Activated CD4-positive, alpha-beta T cell treated with anti-CD3 and anti-CD28 coated beads for 36 hours (primary cell): ENCODE measurements at regions of chr5 and their contacts with region 1.

Region 1: DNA sequence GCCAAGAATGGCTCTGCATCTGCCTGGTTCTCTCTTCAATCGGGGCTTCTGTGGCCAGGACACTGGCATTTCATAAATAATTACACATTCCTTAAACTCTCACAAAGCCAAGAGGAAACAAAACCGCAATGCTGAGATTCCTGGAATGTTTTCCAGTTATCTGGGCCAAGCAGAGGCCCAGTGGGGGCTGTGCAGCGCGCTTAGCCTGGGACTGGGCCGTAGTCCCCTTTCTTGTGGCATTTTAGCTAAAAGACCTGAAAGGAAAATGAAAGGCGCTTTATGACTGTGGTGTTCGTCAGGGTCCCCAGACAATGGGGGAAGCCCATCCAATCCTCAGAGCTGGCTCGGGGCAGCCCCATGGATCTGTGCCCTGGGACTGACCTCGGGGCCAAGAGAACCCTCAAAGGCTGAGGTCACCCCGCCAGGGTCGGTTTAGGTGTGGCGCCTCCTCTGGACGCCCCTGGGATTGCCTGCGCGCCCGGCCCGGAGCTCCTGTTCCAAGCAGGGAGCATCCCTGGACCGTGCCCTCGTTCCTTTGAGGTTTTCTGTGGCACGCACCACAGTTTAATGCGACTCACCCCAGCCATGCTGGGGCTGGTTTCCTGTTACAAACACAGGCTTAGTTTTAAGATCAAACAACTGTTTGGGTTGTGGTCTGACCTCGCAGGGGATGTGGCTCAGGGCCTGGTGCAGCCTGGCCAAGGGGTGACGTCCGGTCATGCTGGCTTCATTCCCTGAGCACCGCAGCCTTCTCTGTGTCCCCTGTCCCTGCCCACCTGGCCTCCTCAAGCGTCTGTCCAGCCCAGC is 51.5 kb upstream of the NKD2 start:
- DNase-seq: peak; percentile 78
- ATAC-seq: peak; percentile 86
- H3K4me3 Mint-ChIP-seq: no peak overlapping the region
- H3K27ac Mint-ChIP-seq: peak overlapping the region; percentile 49
- H3K4me1 Mint-ChIP-seq: peaks cover 26% of the 10 kb centered on the region
- H3K27me3 Mint-ChIP-seq: peaks cover 19% of the 10 kb centered on the region

Region 2: GRCh38 chr5:912280-913091 is 44.7 kb before region 1 on chr5:
- CTCF ChIA-PET with region 1: no interaction called
- POLR2A ChIA-PET with region 1: no interaction called
- intact Hi-C with region 1: loop called in 1 of 2 experiments (anchors 1 kb)
- DNase-seq: peak; percentile 88
- ATAC-seq: peak; percentile 95
- H3K4me3 Mint-ChIP-seq: no peak overlapping the region
- H3K27ac Mint-ChIP-seq: peak overlapping the region; percentile 71
- H3K4me1 Mint-ChIP-seq: peaks cover 13% of the 10 kb centered on the region
- H3K27me3 Mint-ChIP-seq: no peaks in the 10 kb centered on the region

Region 3: GRCh38 chr5:1004461-1005248 is 47.5 kb after region 1 on chr5:
- CTCF ChIA-PET with region 1: interaction called, 6 read pairs
- POLR2A ChIA-PET with region 1: no interaction called
- intact Hi-C with region 1: loop called in 1 of 2 experiments (anchors 10 kb)
- DNase-seq: peak; percentile 74
- ATAC-seq: peak; percentile 56
- H3K4me3 Mint-ChIP-seq: peak overlapping the region; percentile 52
- H3K27ac Mint-ChIP-seq: no peak overlapping the region
- H3K4me1 Mint-ChIP-seq: peaks cover 21% of the 10 kb centered on the region
- H3K27me3 Mint-ChIP-seq: peaks cover 22% of the 10 kb centered on the region

Region 4: DNA sequence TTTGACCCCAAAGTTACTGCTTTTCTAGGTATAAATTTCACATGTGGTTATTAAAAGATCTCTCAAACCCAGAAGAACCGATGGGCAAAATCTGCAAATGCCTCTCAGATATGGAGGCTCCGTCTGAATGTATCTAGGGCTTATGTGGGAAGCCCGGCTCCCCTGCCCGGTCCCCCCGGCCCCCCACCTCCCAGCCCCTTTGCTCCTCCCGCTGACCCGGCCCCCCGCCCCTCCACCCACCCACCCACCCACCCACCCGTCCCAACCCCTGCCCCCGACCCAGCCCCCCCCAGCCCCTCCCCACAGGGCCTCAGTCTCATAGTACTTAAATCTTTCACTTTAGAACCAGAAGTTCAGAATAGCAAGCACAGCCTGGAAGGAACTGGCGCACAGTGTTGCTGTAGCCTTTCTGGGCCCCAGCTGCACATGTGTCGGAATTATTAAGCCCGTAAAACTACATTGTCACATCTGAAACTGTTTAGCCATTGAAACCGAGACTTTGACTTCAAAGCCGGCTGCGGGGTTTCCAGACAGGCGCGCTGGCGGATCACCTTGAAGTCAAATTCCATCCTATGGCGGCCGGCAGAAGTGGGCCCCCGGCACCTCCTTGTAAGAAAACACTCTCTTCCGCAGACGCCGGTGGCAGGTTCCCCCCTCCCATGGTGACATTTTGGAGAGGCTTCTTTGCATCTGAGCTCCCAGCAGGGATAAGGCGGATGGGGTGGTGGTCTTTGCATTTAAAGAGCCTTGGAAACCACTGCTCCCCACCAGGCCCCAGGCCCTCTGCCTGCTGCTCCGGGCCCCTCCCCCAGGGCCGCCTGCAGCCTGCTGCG is 64.2 kb after region 1 on chr5:
- CTCF ChIA-PET with region 1: no interaction called
- POLR2A ChIA-PET with region 1: no interaction called
- intact Hi-C with region 1: no loop called
- DNase-seq: no peak
- ATAC-seq: no peak
- H3K4me3 Mint-ChIP-seq: no peak overlapping the region
- H3K27ac Mint-ChIP-seq: no peak overlapping the region
- H3K4me1 Mint-ChIP-seq: no peaks in the 10 kb centered on the region
- H3K27me3 Mint-ChIP-seq: no peaks in the 10 kb centered on the region

Region 5: DNA sequence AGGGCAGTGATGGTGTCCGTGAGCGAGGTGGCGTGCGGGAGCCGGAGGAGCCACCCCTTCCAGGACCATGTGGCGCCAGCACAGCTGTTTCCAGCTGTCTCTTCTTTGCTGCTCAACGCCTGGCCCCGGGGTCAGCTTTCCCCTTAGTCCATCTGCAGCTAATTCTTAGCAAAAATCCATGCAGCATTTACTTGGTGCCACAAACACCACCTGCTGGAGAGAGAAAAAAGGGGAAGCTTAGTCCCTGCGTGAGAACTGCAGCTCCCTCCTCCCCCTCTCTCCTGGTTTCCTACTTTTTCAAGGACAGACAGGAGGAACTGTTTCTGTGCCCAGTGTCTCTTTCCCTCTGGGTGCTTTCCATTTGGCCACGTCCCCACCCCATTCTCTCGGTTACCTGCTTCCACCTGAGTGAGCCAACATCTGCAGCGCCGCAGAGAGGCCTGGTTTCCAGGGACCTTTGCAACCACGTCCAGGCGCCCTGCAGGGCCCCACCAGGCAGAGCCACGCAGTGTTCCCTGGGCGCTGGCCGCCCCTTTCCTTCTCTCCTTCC is 247.6 kb after region 1 on chr5:
- CTCF ChIA-PET with region 1: no interaction called
- POLR2A ChIA-PET with region 1: no interaction called
- intact Hi-C with region 1: no loop called
- DNase-seq: no peak
- ATAC-seq: no peak
- H3K4me3 Mint-ChIP-seq: no peak overlapping the region
- H3K27ac Mint-ChIP-seq: no peak overlapping the region
- H3K4me1 Mint-ChIP-seq: no peaks in the 10 kb centered on the region
- H3K27me3 Mint-ChIP-seq: no peaks in the 10 kb centered on the region

Region 6: GRCh38 chr5:1467768-1468534 is 510.8 kb after region 1 on chr5:
- CTCF ChIA-PET with region 1: no interaction called
- POLR2A ChIA-PET with region 1: no interaction called
- intact Hi-C with region 1: no loop called
- DNase-seq: peak; percentile 54
- ATAC-seq: no peak
- H3K4me3 Mint-ChIP-seq: no peak overlapping the region
- H3K27ac Mint-ChIP-seq: no peak overlapping the region
- H3K4me1 Mint-ChIP-seq: peaks cover 6% of the 10 kb centered on the region
- H3K27me3 Mint-ChIP-seq: no peaks in the 10 kb centered on the region